ENCODE measurements at regions of chr12 and their contacts with region 1.

Region 1: DNA sequence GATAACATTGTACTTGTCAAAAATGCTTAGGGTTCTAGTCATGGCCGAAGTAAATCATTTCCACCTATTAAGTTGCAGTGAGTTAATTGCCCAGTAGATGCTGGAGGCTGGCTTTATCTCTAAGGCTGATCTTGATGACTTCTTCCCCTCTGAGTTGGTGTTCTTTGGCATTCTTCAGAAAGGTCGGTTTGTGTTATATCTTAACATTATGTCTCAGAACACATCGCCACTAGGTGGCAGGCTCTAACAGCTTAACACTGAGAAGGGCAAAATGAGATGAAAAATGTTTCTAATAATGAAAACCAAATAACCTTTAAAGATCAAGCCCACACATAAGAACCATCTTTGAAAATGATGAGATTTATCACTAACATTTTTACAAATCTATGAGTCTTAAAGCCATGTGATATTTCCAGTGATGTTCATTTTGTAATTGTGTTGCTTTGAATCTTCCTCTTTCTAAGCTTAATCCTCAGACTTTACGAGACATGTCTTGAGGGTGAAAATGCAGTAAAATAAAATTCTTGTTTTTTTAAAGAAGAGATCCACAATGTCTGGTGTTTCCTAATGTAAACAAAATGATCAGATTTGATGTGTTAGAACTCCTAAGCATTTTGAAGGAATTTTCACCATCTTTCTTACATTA is 28.6 kb downstream of the SUDS3 start:
- DNase-seq: peak in 1 of 2 donors; percentile 33
- ATAC-seq: peak in 1 of 4 donors; percentile 72
- H3K4me3 ChIP-seq: no peak overlapping the region
- H3K27ac ChIP-seq: no peak overlapping the region
- H3K4me1 ChIP-seq: no peaks in the 10 kb centered on the region
- H3K27me3 ChIP-seq: no peaks in the 10 kb centered on the region
- CTCF ChIP-seq: peak; percentile 76

Region 2: DNA sequence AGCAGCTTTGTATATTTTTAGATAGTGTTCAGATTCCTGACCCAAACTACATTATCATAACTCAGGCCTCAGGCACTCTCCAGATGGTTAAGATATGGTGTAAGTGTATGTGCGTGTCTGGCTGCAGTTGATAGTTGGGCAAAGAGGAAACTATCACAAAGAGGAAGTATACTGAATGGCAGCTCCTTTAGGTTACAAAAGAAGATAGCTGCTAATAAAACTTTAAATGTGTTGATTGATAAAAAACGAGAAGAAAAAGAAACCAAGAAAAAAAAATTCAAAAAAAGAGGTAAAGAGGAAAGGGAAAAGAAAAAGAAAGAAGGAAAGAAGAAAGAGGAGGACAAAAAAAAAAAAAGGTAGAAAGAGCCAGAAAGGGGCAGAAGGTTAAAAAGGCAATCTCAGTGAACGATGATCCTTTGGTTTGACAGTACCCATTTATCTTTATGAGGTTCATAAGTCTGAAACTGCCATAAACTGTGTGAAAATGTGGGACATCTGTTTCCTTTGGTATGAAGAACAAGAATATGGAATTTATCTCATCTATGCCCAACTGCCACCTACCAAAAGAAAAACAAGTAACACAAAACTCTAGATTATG is 74.5 kb before region 1 on chr12:
- intact Hi-C with region 1: no loop called
- DNase-seq: no peak
- ATAC-seq: peak in 1 of 4 donors; percentile 37
- H3K4me3 ChIP-seq: no peak overlapping the region
- H3K27ac ChIP-seq: no peak overlapping the region
- H3K4me1 ChIP-seq: peaks cover 18% of the 10 kb centered on the region
- H3K27me3 ChIP-seq: no peaks in the 10 kb centered on the region
- CTCF ChIP-seq: no peak

Region 3: DNA sequence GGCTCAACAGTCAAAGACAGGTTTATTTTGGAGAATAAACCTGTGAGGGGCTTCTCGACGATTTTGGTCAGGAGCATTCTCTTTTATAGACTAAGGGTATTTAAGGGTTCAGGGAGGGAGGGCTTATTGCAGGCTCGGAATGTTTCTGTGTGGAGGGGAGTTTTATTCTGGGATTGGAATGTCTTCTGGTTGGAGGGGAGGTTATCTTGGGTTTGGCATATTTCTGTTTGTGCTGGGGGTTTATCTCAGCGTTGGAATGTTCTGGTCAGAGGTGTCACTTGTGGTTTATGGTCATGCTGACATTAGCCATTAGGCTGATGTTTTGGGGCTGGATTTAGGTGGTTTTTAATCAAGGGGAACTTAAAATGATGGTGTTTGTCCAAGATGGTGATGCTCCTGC is 75.2 kb after region 1 on chr12:
- intact Hi-C with region 1: no loop called
- DNase-seq: no peak
- ATAC-seq: no peak
- H3K4me3 ChIP-seq: no peak overlapping the region
- H3K27ac ChIP-seq: no peak overlapping the region
- H3K4me1 ChIP-seq: no peaks in the 10 kb centered on the region
- H3K27me3 ChIP-seq: peaks cover 0 to 3% (median 0%) of the 10 kb centered on the region in 3 donors
- CTCF ChIP-seq: no peak

Region 4: DNA sequence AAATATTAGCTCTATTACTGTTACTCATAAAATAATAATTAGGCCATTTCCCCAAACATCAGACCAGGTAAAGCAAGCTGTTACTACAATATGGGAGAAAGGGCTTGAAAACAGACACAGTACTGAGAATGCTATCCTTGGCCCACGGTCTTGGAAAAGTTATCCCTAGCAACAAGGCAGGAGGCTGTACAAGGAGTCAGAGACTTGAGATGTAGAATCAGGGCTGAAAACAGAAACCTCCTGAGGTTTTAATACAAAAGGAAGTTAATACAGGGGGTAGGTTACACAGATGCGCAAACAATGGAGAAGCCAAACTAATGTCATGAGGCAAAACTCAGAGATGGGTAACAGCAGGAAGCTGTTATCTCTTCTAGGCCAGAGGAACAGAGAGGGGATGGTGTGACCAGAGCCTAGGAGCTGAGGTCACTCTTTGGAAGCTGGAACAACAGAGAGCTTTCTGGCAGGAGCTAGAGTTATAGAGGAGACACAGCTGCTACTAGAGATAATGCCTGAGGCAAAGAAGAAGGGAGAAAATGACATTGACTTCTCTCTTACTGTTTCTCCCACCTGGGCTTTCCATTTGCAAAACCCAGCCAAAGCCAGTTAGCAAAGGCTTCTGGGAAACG is 220.2 kb after region 1 on chr12:
- intact Hi-C with region 1: loop called in 1 of 2 experiments (anchors 5 kb)
- DNase-seq: no peak
- ATAC-seq: no peak
- H3K4me3 ChIP-seq: no peak overlapping the region
- H3K27ac ChIP-seq: no peak overlapping the region
- H3K4me1 ChIP-seq: no peaks in the 10 kb centered on the region
- H3K27me3 ChIP-seq: no peaks in the 10 kb centered on the region
- CTCF ChIP-seq: no peak

Region 5: DNA sequence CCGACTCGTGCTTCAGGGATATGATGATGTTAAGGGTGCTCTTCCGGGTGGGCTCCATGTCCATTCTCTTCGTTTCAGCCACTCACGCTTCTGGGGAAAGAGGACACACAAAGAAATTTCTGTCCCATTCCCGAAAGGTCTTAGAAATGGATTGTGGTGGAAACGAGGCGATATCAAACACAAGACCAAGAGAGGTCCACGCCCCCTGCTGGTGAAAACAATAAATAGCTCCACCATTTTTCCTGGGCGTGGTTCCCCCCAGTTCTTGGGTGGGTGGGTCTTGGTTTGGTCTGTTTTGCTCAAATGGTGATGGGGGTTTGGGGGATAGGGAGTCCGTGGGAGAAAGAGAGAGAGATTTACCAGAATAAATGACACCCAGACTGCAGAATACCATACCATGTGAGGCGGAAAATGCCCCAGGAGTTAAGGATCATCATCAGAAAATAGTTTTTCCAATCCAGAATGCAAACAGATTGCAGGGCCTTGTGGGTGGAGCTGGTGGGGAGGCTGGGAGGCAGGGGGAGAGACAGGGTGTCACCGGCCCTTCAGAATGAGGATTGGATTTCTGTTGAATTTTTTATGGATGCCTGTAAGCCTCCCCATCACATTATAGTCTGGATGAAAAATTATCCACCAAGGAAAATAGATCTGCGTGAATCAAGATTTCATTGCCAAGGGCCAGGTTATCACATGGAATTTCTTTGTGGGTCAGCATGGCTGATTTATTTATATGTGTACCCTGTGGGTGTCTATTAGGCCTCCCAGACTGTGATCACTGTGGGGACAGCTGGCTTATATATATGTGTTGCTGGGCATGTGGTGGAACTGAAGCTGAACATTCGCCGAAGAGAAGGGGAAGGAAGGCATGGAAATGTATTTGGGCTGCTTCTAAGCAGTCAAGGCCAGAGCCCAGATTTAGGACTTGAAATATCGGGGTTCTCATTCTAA is 632.2 kb after region 1 on chr12:
- intact Hi-C with region 1: loop called (anchors 10 kb)
- DNase-seq: no peak
- ATAC-seq: no peak
- H3K4me3 ChIP-seq: no peak overlapping the region
- H3K27ac ChIP-seq: no peak overlapping the region
- H3K4me1 ChIP-seq: no peaks in the 10 kb centered on the region
- H3K27me3 ChIP-seq: peaks cover 0 to 3% (median 3%) of the 10 kb centered on the region in 3 donors
- CTCF ChIP-seq: peak; percentile 49

Measured in psoas muscle (tissue), 8 donors.